Pancreas (tissue), 10 donors: ENCODE measurements at regions of chr15 and their contacts with region 1.

Region 1: GRCh38 chr15:78979456-78980320 is 34.8 kb upstream of the CTSH start:
- DNase-seq: peak in 4 of 6 donors; percentile 57 to 79 (median 75)
- ATAC-seq: peak; percentile 74 to 86 (median 79)
- H3K4me3 ChIP-seq: no peak overlapping the region
- H3K27ac ChIP-seq: no peak overlapping the region
- H3K4me1 ChIP-seq: no peaks in the 10 kb centered on the region
- H3K27me3 ChIP-seq: no peaks in the 10 kb centered on the region
- CTCF ChIP-seq: peak; percentile 59 to 73 (median 68)

Region 2: GRCh38 chr15:78830514-78831228 is 149.0 kb before region 1 on chr15:
- intact Hi-C with region 1: no loop called
- DNase-seq: no peak
- ATAC-seq: no peak
- H3K4me3 ChIP-seq: no peak overlapping the region
- H3K27ac ChIP-seq: no peak overlapping the region
- H3K4me1 ChIP-seq: no peaks in the 10 kb centered on the region
- H3K27me3 ChIP-seq: peaks cover 0 to 24% (median 4%) of the 10 kb centered on the region in 4 donors
- CTCF ChIP-seq: no peak

Region 3: DNA sequence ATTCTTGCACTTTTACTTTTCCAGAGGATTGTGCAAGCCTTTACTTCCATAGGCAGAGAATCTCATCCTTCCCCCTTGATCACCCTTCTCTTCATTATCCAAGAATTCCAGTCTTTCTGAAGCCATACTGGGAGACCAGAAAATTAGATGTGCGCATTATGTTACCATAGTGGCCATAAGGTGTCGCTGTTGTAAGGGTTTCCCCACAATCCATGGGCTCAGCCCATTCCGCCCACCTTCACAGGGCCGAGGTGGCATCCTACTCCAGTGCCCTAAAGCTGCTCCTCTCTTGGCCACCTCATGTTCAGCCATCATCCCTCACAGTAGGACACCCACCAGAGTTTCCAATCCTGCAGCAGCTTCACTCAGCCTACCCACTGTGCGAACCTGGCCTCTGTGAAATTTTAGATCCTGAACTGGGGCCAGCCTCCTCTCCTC is 69.9 kb before region 1 on chr15:
- intact Hi-C with region 1: loop called in 1 of 3 experiments (anchors 5 kb)
- DNase-seq: no peak
- ATAC-seq: peak in 3 of 4 donors; percentile 53 to 79 (median 54)
- H3K4me3 ChIP-seq: no peak overlapping the region
- H3K27ac ChIP-seq: no peak overlapping the region
- H3K4me1 ChIP-seq: peaks cover 3 to 7% (median 5%) of the 10 kb centered on the region in 3 donors
- H3K27me3 ChIP-seq: no peaks in the 10 kb centered on the region
- CTCF ChIP-seq: peak in 3 of 4 donors; percentile 39 to 66 (median 40)